Aorta (tissue), 5 donors: ENCODE measurements at regions of chr11 and their contacts with region 1.

Region 1: DNA sequence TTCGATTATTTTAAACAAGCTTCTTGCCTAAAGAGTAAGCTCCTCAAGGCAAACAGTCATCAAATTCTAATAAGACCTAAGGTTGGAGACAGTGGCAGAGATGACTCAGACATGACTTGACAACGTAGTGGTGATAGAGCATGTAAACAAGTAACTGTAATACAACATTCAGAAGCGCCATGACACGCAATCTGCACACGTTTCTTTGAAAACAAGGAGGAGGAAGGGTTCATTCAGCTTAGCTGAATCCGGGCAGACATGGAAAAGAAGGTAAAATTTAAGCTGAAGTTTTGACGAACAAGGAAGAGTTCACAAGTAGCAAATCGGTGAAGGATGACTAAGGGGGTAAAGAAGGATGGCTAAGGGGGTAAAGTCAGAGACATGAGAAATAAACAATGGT is 152.4 kb upstream of the ZC3H12C start:
- DNase-seq: no peak
- ATAC-seq: no peak
- H3K4me3 ChIP-seq: no peak overlapping the region
- H3K27ac ChIP-seq: no peak overlapping the region
- H3K4me1 ChIP-seq: no peaks in the 10 kb centered on the region
- H3K27me3 ChIP-seq: no peaks in the 10 kb centered on the region

Region 2: DNA sequence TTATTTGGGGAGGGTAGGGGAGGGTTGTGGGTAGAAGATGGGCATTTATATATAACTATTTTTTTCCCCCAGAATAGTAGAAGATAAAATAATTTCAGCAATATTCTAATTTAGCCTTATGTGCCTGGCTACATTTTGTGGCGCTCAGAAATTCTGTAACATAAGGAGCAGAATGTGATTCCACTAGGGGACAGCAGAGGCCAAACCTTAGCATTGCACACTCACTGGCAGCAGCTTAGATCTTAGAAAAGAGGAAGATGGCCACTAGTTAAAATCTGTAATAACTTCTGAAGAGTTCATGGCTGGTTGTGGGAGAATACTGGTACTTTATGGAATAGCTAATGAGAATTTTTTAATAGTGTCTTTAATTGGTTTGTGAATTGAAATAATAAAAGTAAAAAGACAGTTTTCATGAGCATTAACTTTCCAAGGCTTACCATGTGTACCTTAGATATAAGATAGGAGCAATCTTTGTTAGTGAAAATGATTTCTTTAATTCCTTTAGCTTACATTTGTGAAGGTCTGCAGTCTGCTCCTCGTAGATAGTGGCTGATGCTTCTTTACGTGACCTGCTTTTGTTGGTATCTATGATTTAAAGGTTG is 1242.8 kb before region 1 on chr11:
- intact Hi-C with region 1: loop called in 1 of 2 experiments (anchors 5 kb)
- DNase-seq: peak in 1 of 2 donors; percentile 55
- ATAC-seq: peak; percentile 82
- H3K4me3 ChIP-seq: no peak overlapping the region
- H3K27ac ChIP-seq: no peak overlapping the region
- H3K4me1 ChIP-seq: no peaks in the 10 kb centered on the region
- H3K27me3 ChIP-seq: no peaks in the 10 kb centered on the region